Psoas muscle (tissue), 8 donors: ENCODE measurements at regions of chr2 and their contacts with region 1.

Region 1: GRCh38 chr2:237662671-237663093 is 35.3 kb downstream of the LRRFIP1 start:
- DNase-seq: peak; percentile 90 to 92
- ATAC-seq: peak; percentile 81 to 90 (median 86)
- H3K4me3 ChIP-seq: peak overlapping the region; percentile 36
- H3K27ac ChIP-seq: peak overlapping the region; percentile 85
- H3K4me1 ChIP-seq: peaks cover 28% of the 10 kb centered on the region
- H3K27me3 ChIP-seq: no peaks in the 10 kb centered on the region
- CTCF ChIP-seq: no peak

Region 2: GRCh38 chr2:237055386-237056299 is 607.0 kb before region 1 on chr2:
- intact Hi-C with region 1: no loop called
- DNase-seq: no peak
- ATAC-seq: no peak
- H3K4me3 ChIP-seq: no peak overlapping the region
- H3K27ac ChIP-seq: no peak overlapping the region
- H3K4me1 ChIP-seq: peaks cover 4% of the 10 kb centered on the region
- H3K27me3 ChIP-seq: no peaks in the 10 kb centered on the region
- CTCF ChIP-seq: no peak

Region 3: GRCh38 chr2:237603718-237604362 is 58.8 kb before region 1 on chr2:
- intact Hi-C with region 1: loop called in 1 of 2 experiments (anchors 5 kb)
- DNase-seq: no peak
- ATAC-seq: no peak
- H3K4me3 ChIP-seq: no peak overlapping the region
- H3K27ac ChIP-seq: peak overlapping the region; percentile 16
- H3K4me1 ChIP-seq: peaks cover 21% of the 10 kb centered on the region
- H3K27me3 ChIP-seq: no peaks in the 10 kb centered on the region
- CTCF ChIP-seq: no peak